CD8-positive, alpha-beta T cell (primary cell): ENCODE measurements at regions of chr17 and their contacts with region 1.

Region 1: GRCh38 chr17:78133971-78134898 is 3.7 kb downstream of the TMC8 start:
- DNase-seq: peak; percentile 65 to 92 (median 80)
- ATAC-seq: peak; percentile 29
- H3K4me3 ChIP-seq: peak overlapping the region; percentile 95 to 97
- H3K4me3 Mint-ChIP-seq: peak overlapping the region; percentile 79
- H3K27ac ChIP-seq: peak overlapping the region; percentile 37 to 69
- H3K27ac Mint-ChIP-seq: peak overlapping the region; percentile 88
- H3K4me1 ChIP-seq: peaks cover 74% of the 10 kb centered on the region
- H3K4me1 Mint-ChIP-seq: peaks cover 72% of the 10 kb centered on the region
- H3K27me3 ChIP-seq: no peaks in the 10 kb centered on the region
- H3K27me3 Mint-ChIP-seq: no peaks in the 10 kb centered on the region
- CTCF ChIP-seq: peak; percentile 72

Region 2: GRCh38 chr17:77451245-77451893 is 682.9 kb before region 1 on chr17:
- CTCF ChIA-PET with region 1: no interaction called
- POLR2A ChIA-PET with region 1: interaction called, 4 read pairs
- intact Hi-C with region 1: loop called (anchors 5 kb)
- DNase-seq: peak; percentile 36 to 86 (median 73)
- ATAC-seq: peak; percentile 25
- H3K4me3 ChIP-seq: peak overlapping the region; percentile 93 to 99
- H3K4me3 Mint-ChIP-seq: peak overlapping the region; percentile 94
- H3K27ac ChIP-seq: peak overlapping the region; percentile 80 to 86
- H3K27ac Mint-ChIP-seq: peak overlapping the region; percentile 100
- H3K4me1 ChIP-seq: peaks cover 54% of the 10 kb centered on the region
- H3K4me1 Mint-ChIP-seq: peaks cover 50% of the 10 kb centered on the region
- H3K27me3 ChIP-seq: no peaks in the 10 kb centered on the region
- H3K27me3 Mint-ChIP-seq: no peaks in the 10 kb centered on the region
- CTCF ChIP-seq: no peak

Region 3: GRCh38 chr17:78082988-78083387 is 51.2 kb before region 1 on chr17:
- CTCF ChIA-PET with region 1: interaction called, 10 read pairs
- POLR2A ChIA-PET with region 1: no interaction called
- intact Hi-C with region 1: no loop called
- DNase-seq: no peak
- ATAC-seq: no peak
- H3K4me3 ChIP-seq: no peak overlapping the region
- H3K4me3 Mint-ChIP-seq: no peak overlapping the region
- H3K27ac ChIP-seq: no peak overlapping the region
- H3K27ac Mint-ChIP-seq: peak overlapping the region; percentile 18
- H3K4me1 ChIP-seq: no peaks in the 10 kb centered on the region
- H3K4me1 Mint-ChIP-seq: peaks cover 3% of the 10 kb centered on the region
- H3K27me3 ChIP-seq: no peaks in the 10 kb centered on the region
- H3K27me3 Mint-ChIP-seq: no peaks in the 10 kb centered on the region
- CTCF ChIP-seq: no peak

Region 4: GRCh38 chr17:78120971-78121800 is 13.0 kb before region 1 on chr17:
- CTCF ChIA-PET with region 1: interaction called, 200 read pairs
- POLR2A ChIA-PET with region 1: interaction called, 583 read pairs
- intact Hi-C with region 1: loop called (anchors 1 kb)
- DNase-seq: peak in 6 of 9 experiments; percentile 61 to 84 (median 75)
- ATAC-seq: peak; percentile 51
- H3K4me3 ChIP-seq: peak overlapping the region; percentile 36 to 51
- H3K4me3 Mint-ChIP-seq: peak overlapping the region; percentile 83
- H3K27ac ChIP-seq: peak overlapping the region; percentile 47 to 75
- H3K27ac Mint-ChIP-seq: peak overlapping the region; percentile 93
- H3K4me1 ChIP-seq: peaks cover 91% of the 10 kb centered on the region
- H3K4me1 Mint-ChIP-seq: peaks cover 70% of the 10 kb centered on the region
- H3K27me3 ChIP-seq: no peaks in the 10 kb centered on the region
- H3K27me3 Mint-ChIP-seq: no peaks in the 10 kb centered on the region
- CTCF ChIP-seq: no peak

Region 5: GRCh38 chr17:78176548-78177025 is 42.4 kb after region 1 on chr17:
- CTCF ChIA-PET with region 1: interaction called, 58 read pairs
- POLR2A ChIA-PET with region 1: interaction called, 4 read pairs
- intact Hi-C with region 1: no loop called
- DNase-seq: peak; percentile 65 to 89 (median 77)
- ATAC-seq: peak; percentile 90
- H3K4me3 ChIP-seq: no peak overlapping the region
- H3K4me3 Mint-ChIP-seq: no peak overlapping the region
- H3K27ac ChIP-seq: no peak overlapping the region
- H3K27ac Mint-ChIP-seq: no peak overlapping the region
- H3K4me1 ChIP-seq: peaks cover 39% of the 10 kb centered on the region
- H3K4me1 Mint-ChIP-seq: peaks cover 41% of the 10 kb centered on the region
- H3K27me3 ChIP-seq: no peaks in the 10 kb centered on the region
- H3K27me3 Mint-ChIP-seq: no peaks in the 10 kb centered on the region
- CTCF ChIP-seq: peak; percentile 88